Activated CD4-positive, alpha-beta T cell treated with anti-CD3 and anti-CD28 coated beads for 36 hours (primary cell): ENCODE measurements at regions of chr16 and their contacts with region 1.

Region 1: GRCh38 chr16:56625140-56625942 is at the start of gene MT1E:
- DNase-seq: peak; percentile 82
- ATAC-seq: peak; percentile 88
- H3K4me3 Mint-ChIP-seq: peak within 1 kb of the TSS; percentile 71
- H3K27ac Mint-ChIP-seq: peak within 1 kb of the TSS; percentile 79
- H3K4me1 Mint-ChIP-seq: peaks cover 14% of the 10 kb centered on the region
- H3K27me3 Mint-ChIP-seq: peaks cover 26% of the 10 kb centered on the region
- total RNA-seq, gene MT1E: 61.1 to 108 TPM

Region 2: DNA sequence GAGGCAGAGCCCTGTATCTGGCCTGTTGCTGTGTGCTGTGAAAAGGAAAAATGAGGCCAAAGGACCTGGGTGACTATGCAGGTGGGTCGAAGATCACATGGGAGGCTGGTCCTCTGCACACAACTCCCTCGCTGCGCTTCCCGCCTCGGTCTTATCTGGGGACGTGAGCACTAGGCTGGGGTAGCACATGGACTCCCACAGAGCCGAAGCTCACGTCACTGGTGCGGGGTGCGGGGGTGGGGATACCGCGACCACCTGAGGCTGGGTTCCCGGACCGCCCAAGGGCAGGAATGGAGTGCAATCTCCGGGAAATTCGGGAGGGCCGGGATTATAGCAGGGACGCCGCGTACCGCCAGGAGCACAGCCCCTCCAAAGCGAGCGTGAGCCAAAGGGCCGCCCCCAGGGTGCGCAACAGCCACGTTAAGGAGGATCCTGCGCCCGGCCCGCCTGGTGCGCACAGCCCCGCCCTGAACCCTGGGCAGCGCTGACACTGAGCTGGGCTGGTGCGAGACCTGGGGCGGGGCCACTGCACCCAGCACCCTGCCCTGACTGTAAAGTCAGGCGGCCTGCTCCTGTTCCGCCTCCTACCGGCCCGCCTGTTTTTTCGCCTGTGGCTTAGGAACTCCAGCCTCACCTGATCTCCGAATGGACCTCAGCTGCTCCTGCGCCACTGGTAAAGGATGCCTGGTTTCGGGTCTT is 17.9 kb after region 1 on chr16:
- CTCF ChIA-PET with region 1: interaction called, 8 read pairs
- POLR2A ChIA-PET with region 1: interaction called, 5 read pairs
- intact Hi-C with region 1: loop called in 1 of 2 experiments (anchors 2 kb)
- DNase-seq: peak; percentile 90
- ATAC-seq: peak; percentile 100
- H3K4me3 Mint-ChIP-seq: peak overlapping the region; percentile 39
- H3K27ac Mint-ChIP-seq: peak overlapping the region; percentile 39
- H3K4me1 Mint-ChIP-seq: peaks cover 20% of the 10 kb centered on the region
- H3K27me3 Mint-ChIP-seq: peaks cover 43% of the 10 kb centered on the region

Region 3: DNA sequence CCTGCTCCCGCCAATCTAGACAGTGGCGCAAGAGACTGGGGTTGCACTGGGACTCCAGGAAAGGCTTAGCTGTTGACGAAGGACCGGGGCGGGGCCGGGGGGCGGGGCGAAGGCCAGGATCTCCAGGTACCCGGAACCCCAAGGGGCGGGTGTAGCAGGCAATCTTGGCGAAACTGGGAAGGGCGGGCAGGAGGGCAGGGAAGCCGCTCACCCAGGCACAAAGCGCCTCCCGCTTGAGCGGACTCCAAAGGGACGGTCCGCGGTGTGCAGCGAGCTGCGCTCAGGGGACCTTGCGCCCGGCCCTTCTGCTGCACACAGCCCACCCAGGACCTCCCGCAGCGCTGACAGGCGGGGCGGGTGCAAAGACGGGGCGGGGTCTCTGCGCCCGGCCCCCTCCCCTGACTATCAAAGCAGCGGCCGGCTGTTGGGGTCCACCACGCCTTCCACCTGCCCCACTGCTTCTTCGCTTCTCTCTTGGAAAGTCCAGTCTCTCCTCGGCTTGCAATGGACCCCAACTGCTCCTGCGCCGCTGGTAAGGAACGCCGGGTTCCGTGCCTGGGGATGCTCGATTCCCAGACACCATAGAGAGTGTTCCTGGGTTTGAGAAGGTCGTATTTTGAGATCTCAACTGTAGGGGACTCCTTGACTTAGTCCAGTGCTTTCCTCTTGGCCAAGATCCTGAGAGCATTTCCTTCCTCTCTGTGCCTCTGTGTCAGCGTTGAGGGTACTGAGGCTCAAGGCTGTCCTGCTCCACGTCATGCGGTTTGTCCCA is 32.4 kb after region 1 on chr16 and contains the start of gene MT1F:
- CTCF ChIA-PET with region 1: interaction called, 5 read pairs
- POLR2A ChIA-PET with region 1: interaction called, 5 read pairs
- intact Hi-C with region 1: loop called in 1 of 2 experiments (anchors 1 kb)
- DNase-seq: peak; percentile 84
- ATAC-seq: peak; percentile 85
- H3K4me3 Mint-ChIP-seq: peak within 1 kb of the TSS; percentile 79
- H3K27ac Mint-ChIP-seq: peak within 1 kb of the TSS; percentile 76
- H3K4me1 Mint-ChIP-seq: peaks cover 16% of the 10 kb centered on the region
- H3K27me3 Mint-ChIP-seq: peaks cover 2% of the 10 kb centered on the region
- total RNA-seq, gene MT1F: 7.0 to 7.1 TPM

Region 4: DNA sequence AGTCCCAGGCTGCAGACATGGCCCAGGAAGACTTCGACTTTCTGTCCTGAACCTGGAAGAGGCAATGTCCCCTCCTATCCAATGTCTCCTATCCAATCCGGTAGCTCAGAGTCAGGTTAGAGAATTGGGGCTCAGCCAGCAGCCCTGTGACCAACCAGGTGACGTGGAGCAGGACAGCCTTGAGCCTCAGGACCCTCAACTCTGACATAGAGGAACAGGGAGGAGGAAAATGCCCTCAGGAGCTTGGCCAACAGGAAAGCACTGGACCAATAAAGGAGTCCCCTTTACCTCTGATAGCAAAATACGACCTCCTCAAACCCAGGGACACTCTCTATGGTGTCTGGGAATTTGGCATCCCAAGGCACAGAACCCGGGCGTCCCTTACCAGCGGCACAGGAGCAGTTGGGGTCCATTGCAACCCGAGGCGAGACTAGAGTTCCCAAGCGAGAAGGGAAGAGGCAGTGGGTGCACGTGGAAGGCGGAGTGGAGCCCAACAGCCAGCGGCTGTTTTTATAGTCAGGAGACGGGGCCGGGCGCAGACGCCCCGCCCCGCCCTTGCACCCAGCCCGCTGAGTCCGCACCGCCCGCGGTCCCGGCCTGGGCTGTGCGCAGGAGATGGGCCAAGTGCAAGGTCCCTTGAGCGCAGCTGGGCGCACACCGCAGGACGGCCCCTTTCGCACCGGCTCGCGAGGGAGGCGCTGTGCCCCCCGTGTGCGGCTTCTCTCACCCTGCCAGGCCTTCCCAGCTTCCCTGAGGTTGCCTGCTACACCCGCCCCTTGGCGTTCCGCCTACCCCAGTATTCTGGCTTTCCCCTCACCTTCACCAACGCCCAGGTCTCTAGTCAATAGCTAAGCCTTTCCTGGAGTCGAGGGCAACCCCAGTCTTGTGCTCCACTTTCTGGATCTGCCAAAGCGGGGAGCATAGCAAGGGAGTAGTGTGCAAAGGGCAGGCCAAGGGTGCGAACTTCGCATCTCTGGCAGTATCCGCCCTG is 42.5 kb after region 1 on chr16 and contains the start of gene MT1G:
- CTCF ChIA-PET with region 1: interaction called, 3 read pairs
- POLR2A ChIA-PET with region 1: no interaction called
- intact Hi-C with region 1: loop called in 1 of 2 experiments (anchors 2 kb)
- DNase-seq: peak; percentile 69
- ATAC-seq: peak; percentile 70
- H3K4me3 Mint-ChIP-seq: peak within 1 kb of the TSS; percentile 50
- H3K27ac Mint-ChIP-seq: no peak within 1 kb of the TSS
- H3K4me1 Mint-ChIP-seq: peaks cover 19% of the 10 kb centered on the region
- H3K27me3 Mint-ChIP-seq: peaks cover 63% of the 10 kb centered on the region
- total RNA-seq, gene MT1G: 14.7 TPM

Region 5: DNA sequence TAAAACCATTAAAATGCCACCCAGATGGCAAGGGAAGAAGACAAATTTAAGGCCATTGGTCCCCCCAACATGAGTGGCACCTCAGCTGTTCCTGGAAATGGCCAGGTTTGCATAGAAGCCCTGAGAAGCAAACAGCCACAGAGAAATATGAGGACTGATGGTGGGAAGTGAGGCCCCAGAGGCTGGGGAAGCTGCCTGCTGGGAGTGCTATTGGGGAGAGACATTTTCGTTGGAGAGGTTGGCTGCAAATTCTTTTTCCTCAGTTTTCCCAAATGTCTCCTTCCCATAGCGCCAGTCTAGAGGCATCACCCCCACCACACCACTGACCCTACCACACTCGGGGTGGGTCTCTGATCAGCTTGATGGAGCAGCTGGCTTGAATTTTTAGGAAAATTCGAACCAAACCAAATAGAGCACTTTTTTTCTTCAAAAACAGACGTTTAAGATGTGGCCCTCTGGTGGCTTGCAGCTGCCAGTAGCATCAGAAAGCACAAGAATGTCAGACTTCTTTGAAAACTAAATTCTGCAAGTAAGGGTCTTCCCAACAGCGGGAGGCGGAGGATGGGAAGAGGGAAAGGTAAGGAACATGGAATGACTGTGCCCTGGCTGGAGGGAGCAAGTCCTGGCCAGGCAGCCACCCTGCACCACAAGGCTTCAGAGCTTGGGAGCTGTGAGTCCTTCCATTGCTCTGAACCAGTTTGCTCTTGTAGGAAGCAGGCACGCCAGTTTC is 226.5 kb after region 1 on chr16:
- CTCF ChIA-PET with region 1: no interaction called
- POLR2A ChIA-PET with region 1: no interaction called
- intact Hi-C with region 1: no loop called
- DNase-seq: no peak
- ATAC-seq: no peak
- H3K4me3 Mint-ChIP-seq: no peak overlapping the region
- H3K27ac Mint-ChIP-seq: no peak overlapping the region
- H3K4me1 Mint-ChIP-seq: peaks cover 17% of the 10 kb centered on the region
- H3K27me3 Mint-ChIP-seq: no peaks in the 10 kb centered on the region